Activated CD4-positive, alpha-beta T cell treated with anti-CD3 and anti-CD28 coated beads, Interleukin-2, amount 10 ng/mL, durations not matched to agents 24 days and 14 days (primary cell): ENCODE measurements at regions of chr12 and their contacts with region 1.

Region 1: DNA sequence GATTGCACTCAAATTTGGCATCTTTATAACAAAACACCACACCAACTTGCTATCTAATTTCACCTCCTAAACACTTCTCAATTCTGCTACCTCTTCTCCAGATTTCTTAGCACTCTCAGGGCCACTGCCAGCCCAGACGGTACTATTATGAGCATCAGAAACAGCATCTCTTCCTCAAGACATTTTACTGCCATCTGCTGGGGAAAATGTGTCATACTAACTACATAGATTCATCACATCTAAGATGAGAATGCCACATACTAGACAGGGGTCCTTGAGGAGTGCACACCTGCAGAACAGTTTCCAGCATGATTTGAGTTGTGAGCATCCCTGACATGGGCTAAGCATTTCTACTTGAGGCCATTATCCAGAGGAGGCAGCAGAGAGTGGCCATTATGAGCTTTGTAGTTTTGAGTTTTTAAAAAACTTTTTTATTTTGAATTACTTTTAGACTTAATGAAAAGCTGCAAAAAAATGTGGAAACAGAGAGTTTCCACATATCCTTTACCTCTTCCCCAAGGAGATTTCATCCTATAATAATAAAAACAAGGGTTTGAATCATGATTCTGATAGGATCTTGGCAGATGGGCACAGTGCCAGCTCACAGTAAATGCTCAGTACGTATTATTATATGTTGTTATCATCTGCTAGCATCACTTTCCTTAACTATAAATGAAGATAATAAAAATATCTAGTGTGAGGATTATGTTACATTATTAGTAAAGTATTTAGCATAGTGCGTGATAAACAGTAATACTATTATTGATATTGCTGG is 15.2 kb upstream of the GRIP1 start:
- DNase-seq: peak; percentile 78
- H3K4me3 Mint-ChIP-seq: no peak overlapping the region
- H3K27ac Mint-ChIP-seq: no peak overlapping the region
- H3K4me1 Mint-ChIP-seq: no peaks in the 10 kb centered on the region
- H3K27me3 Mint-ChIP-seq: peaks cover 10% of the 10 kb centered on the region

Region 2: DNA sequence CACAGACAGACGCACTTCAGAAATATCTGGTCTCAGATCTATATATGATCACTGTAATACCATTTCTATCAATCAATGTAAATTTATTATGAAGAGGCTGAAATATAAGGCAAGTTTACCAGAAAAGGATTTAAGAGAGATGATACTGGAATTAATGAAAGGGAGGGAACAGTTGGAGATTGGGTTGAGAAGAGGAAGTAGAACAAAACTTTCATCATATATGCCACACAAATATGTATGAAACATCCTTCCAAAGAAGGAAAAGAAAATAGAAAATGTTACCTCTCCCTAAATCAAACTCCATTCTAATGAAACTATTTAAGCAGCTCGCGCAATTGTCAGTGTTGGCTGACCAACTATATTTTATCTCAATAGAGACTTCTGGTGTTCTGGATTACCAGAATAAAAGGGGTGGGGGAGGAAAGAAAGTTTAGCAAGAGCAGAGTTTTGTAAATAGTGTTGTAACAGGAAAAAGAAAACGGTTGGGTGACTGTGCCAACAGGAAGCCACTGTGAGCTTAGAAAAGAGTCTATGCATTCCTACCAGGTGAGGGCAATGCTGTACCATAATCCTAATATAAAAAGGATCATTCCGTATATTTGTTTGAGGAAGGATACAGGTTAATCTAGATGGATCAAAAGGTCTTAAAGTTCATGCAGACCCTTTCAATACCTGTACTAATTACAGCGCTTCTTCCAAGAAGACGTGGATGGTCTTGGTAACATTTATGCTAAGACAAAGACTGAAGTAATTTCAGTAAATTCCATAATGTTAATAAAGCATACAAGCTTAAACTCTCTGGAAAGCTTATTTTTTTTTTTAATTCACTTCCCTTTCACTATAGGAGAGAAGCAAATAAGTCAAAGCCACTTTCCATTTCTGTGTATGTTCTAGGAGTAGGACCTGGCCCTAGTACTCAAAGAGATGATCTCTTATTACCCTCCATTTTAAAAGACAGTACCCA is 549.0 kb before region 1 on chr12:
- intact Hi-C with region 1: loop called (anchors 10 kb)
- DNase-seq: peak; percentile 64
- H3K4me3 Mint-ChIP-seq: no peak overlapping the region
- H3K27ac Mint-ChIP-seq: peak overlapping the region; percentile 54
- H3K4me1 Mint-ChIP-seq: peaks cover 18% of the 10 kb centered on the region
- H3K27me3 Mint-ChIP-seq: no peaks in the 10 kb centered on the region

Region 3: DNA sequence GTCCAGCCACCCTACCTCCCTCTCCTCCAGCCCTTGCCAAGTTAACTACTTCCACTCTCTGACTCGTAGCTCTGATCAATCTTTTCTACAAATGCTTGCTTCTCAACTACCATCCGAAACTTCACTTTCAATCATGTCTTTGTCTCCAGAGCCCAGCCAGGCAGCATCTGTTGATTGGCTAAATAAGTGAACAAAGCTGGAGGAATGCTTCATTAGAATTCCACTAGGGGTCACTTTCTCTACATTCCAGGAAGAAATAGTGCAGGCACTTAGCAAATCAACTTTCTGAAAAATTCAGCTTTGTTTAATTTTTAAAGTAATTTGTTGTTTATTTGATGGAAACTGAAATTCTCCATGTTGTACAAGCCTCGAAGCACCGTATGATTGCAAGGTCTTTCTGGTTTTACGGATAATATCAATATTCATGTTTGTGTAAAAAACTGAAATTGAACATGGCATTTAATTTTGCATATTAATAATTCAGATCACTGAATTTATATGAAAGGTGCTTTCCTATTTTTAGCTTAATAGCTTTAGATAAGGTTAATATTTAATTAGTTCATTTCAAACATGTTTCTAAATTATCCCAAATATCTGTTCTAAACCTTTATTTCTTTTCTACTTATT is 424.2 kb before region 1 on chr12:
- intact Hi-C with region 1: loop called (anchors 5 kb)
- DNase-seq: peak; percentile 74
- H3K4me3 Mint-ChIP-seq: no peak overlapping the region
- H3K27ac Mint-ChIP-seq: no peak overlapping the region
- H3K4me1 Mint-ChIP-seq: peaks cover 6% of the 10 kb centered on the region
- H3K27me3 Mint-ChIP-seq: no peaks in the 10 kb centered on the region